Naive thymus-derived CD4-positive, alpha-beta T cell (primary cell): ENCODE measurements at regions of chr15 and their contacts with region 1.

Region 1: GRCh38 chr15:45457641-45458433 is 64.7 kb downstream of the SLC30A4 start:
- DNase-seq: peak; percentile 33 to 85 (median 81)
- ATAC-seq: peak; percentile 77
- H3K4me3 ChIP-seq: peak overlapping the region; percentile 58
- H3K4me3 Mint-ChIP-seq: peak overlapping the region; percentile 80 to 95 (median 90)
- H3K27ac ChIP-seq: peak overlapping the region; percentile 68
- H3K27ac Mint-ChIP-seq: peak overlapping the region; percentile 74 to 92 (median 83)
- H3K4me1 ChIP-seq: peaks cover 16 to 33% of the 10 kb centered on the region in 2 donors
- H3K4me1 Mint-ChIP-seq: peaks cover 25 to 60% (median 40%) of the 10 kb centered on the region in 7 donors
- H3K27me3 ChIP-seq: no peaks in the 10 kb centered on the region
- H3K27me3 Mint-ChIP-seq: no peaks in the 10 kb centered on the region

Region 2: GRCh38 chr15:45126535-45127158 is 331.2 kb before region 1 on chr15:
- CTCF ChIA-PET with region 1: no interaction called
- POLR2A ChIA-PET with region 1: no interaction called
- intact Hi-C with region 1: loop called in 1 of 2 experiments (anchors 1 kb)
- DNase-seq: peak in 7 of 9 donors; percentile 17 to 51 (median 43)
- ATAC-seq: peak; percentile 72
- H3K4me3 ChIP-seq: no peak overlapping the region
- H3K4me3 Mint-ChIP-seq: no peak overlapping the region
- H3K27ac ChIP-seq: no peak overlapping the region
- H3K27ac Mint-ChIP-seq: no peak overlapping the region
- H3K4me1 ChIP-seq: no peaks in the 10 kb centered on the region
- H3K4me1 Mint-ChIP-seq: peaks cover 0 to 13% (median 6%) of the 10 kb centered on the region in 7 donors
- H3K27me3 ChIP-seq: peaks cover 0 to 8% of the 10 kb centered on the region in 2 donors
- H3K27me3 Mint-ChIP-seq: peaks cover 59 to 70% (median 61%) of the 10 kb centered on the region in 5 donors

Region 3: GRCh38 chr15:45205192-45205591 is 252.6 kb before region 1 on chr15:
- CTCF ChIA-PET with region 1: no interaction called
- POLR2A ChIA-PET with region 1: no interaction called
- intact Hi-C with region 1: loop called (anchors 1 kb)
- DNase-seq: peak in 8 of 9 donors; percentile 31 to 61 (median 46)
- ATAC-seq: peak; percentile 27
- H3K4me3 ChIP-seq: no peak overlapping the region
- H3K4me3 Mint-ChIP-seq: no peak overlapping the region
- H3K27ac ChIP-seq: no peak overlapping the region
- H3K27ac Mint-ChIP-seq: peak overlapping the region in 3 of 9 donors; percentile 12 to 28 (median 19)
- H3K4me1 ChIP-seq: peaks cover 5% of the 10 kb centered on the region in 2 donors
- H3K4me1 Mint-ChIP-seq: peaks cover 0 to 8% (median 4%) of the 10 kb centered on the region in 7 donors
- H3K27me3 ChIP-seq: no peaks in the 10 kb centered on the region
- H3K27me3 Mint-ChIP-seq: peaks cover 9 to 35% (median 10%) of the 10 kb centered on the region in 5 donors

Region 4: GRCh38 chr15:45424429-45424828 is 33.4 kb before region 1 on chr15:
- CTCF ChIA-PET with region 1: interaction called, 34 read pairs
- POLR2A ChIA-PET with region 1: no interaction called
- intact Hi-C with region 1: loop called (anchors 5 kb)
- DNase-seq: no peak
- ATAC-seq: no peak
- H3K4me3 ChIP-seq: no peak overlapping the region
- H3K4me3 Mint-ChIP-seq: no peak overlapping the region
- H3K27ac ChIP-seq: no peak overlapping the region
- H3K27ac Mint-ChIP-seq: no peak overlapping the region
- H3K4me1 ChIP-seq: no peaks in the 10 kb centered on the region
- H3K4me1 Mint-ChIP-seq: peaks cover 0 to 2% (median 0%) of the 10 kb centered on the region in 7 donors
- H3K27me3 ChIP-seq: no peaks in the 10 kb centered on the region
- H3K27me3 Mint-ChIP-seq: peaks cover 0 to 11% (median 0%) of the 10 kb centered on the region in 5 donors

Region 5: GRCh38 chr15:45522328-45523160 is 64.7 kb after region 1 on chr15 and contains the start of gene SLC30A4:
- CTCF ChIA-PET with region 1: interaction called, 3 read pairs
- POLR2A ChIA-PET with region 1: no interaction called
- intact Hi-C with region 1: loop called (anchors 1 to 2 kb)
- DNase-seq: peak; percentile 49 to 75 (median 66)
- ATAC-seq: peak; percentile 92
- H3K4me3 ChIP-seq: peak within 1 kb of the TSS; percentile 66
- H3K4me3 Mint-ChIP-seq: peak within 1 kb of the TSS; percentile 93 to 98 (median 94)
- H3K27ac ChIP-seq: peak within 1 kb of the TSS; percentile 64
- H3K27ac Mint-ChIP-seq: peak within 1 kb of the TSS; percentile 79 to 90 (median 85)
- H3K4me1 ChIP-seq: peaks cover 0 to 8% of the 10 kb centered on the region in 2 donors
- H3K4me1 Mint-ChIP-seq: peaks cover 23 to 43% (median 33%) of the 10 kb centered on the region in 7 donors
- H3K27me3 ChIP-seq: no peaks in the 10 kb centered on the region
- H3K27me3 Mint-ChIP-seq: peaks cover 0 to 40% (median 0%) of the 10 kb centered on the region in 5 donors
- total RNA-seq, gene SLC30A4: 2.6 to 4.4 (median 3.0) TPM

Region 6: DNA sequence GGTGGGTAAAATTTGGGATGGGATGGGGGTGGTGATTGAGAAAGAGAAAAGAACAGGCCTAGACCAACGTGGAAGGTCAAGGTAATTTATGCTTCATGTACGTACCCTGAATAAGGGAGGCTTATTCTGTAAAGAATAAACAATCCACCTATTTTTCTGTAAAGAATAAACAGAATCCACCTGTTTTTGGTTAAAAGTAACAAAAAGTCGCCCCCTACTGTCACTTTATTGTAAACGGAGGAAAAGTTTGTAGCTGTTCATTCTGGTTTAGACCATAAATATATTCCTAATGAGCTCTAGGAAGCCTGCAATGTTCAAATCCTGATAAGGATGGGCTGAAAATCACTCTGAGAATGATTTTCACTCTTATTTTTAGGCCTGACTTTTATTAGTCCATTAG is 153.5 kb after region 1 on chr15:
- CTCF ChIA-PET with region 1: interaction called, 24 read pairs
- POLR2A ChIA-PET with region 1: no interaction called
- intact Hi-C with region 1: loop called (anchors 1 kb)
- DNase-seq: peak in 2 of 9 donors; percentile 9 to 11
- ATAC-seq: no peak
- H3K4me3 ChIP-seq: no peak overlapping the region
- H3K4me3 Mint-ChIP-seq: no peak overlapping the region
- H3K27ac ChIP-seq: no peak overlapping the region
- H3K27ac Mint-ChIP-seq: peak overlapping the region in 2 of 9 donors; percentile 5 to 7
- H3K4me1 ChIP-seq: no peaks in the 10 kb centered on the region
- H3K4me1 Mint-ChIP-seq: peaks cover 0 to 15% (median 0%) of the 10 kb centered on the region in 7 donors
- H3K27me3 ChIP-seq: no peaks in the 10 kb centered on the region
- H3K27me3 Mint-ChIP-seq: no peaks in the 10 kb centered on the region